Activated CD4-positive, alpha-beta T cell treated with anti-CD3 and anti-CD28 coated beads for 36 hours (primary cell): ENCODE measurements at regions of chr1 and their contacts with region 1.

Region 1: GRCh38 chr1:25997828-25998761 is at the start of gene PAFAH2:
- DNase-seq: peak; percentile 99
- ATAC-seq: peak; percentile 98
- H3K4me3 Mint-ChIP-seq: peak within 1 kb of the TSS; percentile 98
- H3K27ac Mint-ChIP-seq: peak within 1 kb of the TSS; percentile 98
- H3K4me1 Mint-ChIP-seq: peaks cover 28% of the 10 kb centered on the region
- H3K27me3 Mint-ChIP-seq: no peaks in the 10 kb centered on the region
- total RNA-seq, gene PAFAH2: 6.6 to 7.9 TPM

Region 2: DNA sequence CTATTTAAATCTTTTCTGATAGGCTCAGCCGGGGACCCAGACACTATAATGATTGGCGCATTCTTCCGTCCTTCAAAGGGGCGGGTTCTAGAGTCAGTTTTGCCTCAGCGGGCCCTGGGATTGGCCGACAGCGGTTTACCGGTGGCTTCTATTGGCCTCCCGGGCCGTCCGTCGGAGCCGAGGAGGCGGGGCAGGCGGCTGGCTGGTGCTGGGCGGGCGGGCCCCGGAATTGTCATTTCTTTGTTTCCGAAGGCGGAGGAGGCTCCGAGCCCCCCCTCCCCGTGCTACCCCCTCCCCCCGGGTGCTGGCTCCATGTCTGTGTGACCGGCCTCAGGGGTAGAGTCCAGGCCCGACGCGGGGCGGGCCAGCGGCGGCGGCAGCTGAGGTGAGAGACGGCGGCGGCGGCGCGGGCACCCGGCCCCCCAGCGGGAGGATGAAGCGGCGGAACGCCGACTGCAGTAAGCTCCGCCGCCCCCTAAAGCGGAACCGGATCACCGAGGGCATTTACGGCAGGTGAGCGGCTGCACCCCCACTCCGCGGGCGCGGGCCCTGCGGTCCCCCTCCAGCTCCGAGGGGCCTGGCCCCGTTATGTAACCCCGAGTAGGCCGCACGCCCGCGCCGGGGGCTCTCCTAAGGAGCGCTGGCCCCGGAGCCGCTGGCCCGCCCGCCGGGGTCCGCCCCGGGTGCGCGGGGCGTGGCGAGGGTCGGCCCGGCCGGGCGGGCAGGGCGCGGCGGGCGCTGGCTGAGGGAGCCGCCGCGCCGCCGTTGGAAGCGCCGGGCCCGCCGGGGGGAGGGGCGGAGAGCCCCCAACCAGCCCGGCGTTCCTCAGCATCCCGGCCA is 567.2 kb before region 1 on chr1 and contains the start of gene MACO1:
- CTCF ChIA-PET with region 1: no interaction called
- POLR2A ChIA-PET with region 1: no interaction called
- intact Hi-C with region 1: loop called in 1 of 2 experiments (anchors 1 kb)
- DNase-seq: peak; percentile 98
- ATAC-seq: peak; percentile 93
- H3K4me3 Mint-ChIP-seq: peak within 1 kb of the TSS; percentile 93
- H3K27ac Mint-ChIP-seq: peak within 1 kb of the TSS; percentile 99
- H3K4me1 Mint-ChIP-seq: peaks cover 47% of the 10 kb centered on the region
- H3K27me3 Mint-ChIP-seq: no peaks in the 10 kb centered on the region
- total RNA-seq, gene MACO1: 15.7 to 18.5 TPM

Region 3: DNA sequence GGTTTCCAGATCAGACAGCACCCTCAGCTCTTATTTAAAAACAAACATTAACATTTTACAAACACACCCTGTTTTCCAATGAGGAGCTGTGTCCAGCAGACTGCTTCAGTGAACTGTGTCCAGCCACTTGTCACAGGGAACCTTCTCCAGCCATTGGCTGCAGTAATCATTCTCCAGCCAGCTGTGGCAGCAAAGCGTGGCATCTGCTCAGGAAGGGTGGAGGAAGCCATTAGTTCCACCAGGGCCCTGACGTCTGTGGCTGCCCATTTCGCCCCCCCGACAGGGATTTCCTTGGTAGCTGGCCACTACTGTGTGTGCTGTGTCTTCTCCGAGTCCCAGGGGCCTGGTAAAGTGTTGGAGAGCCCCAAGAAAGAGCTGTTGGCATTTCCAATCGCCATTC is 261.0 kb before region 1 on chr1:
- CTCF ChIA-PET with region 1: no interaction called
- POLR2A ChIA-PET with region 1: no interaction called
- intact Hi-C with region 1: no loop called
- DNase-seq: no peak
- ATAC-seq: no peak
- H3K4me3 Mint-ChIP-seq: no peak overlapping the region
- H3K27ac Mint-ChIP-seq: no peak overlapping the region
- H3K4me1 Mint-ChIP-seq: peaks cover 29% of the 10 kb centered on the region
- H3K27me3 Mint-ChIP-seq: no peaks in the 10 kb centered on the region

Region 4: GRCh38 chr1:25819576-25820246 is 178.4 kb before region 1 on chr1 and contains the start of gene MTFR1L:
- CTCF ChIA-PET with region 1: interaction called, 5 read pairs
- POLR2A ChIA-PET with region 1: no interaction called
- intact Hi-C with region 1: loop called (anchors 1 to 2 kb)
- DNase-seq: peak; percentile 97
- ATAC-seq: peak; percentile 92
- H3K4me3 Mint-ChIP-seq: peak within 1 kb of the TSS; percentile 87
- H3K27ac Mint-ChIP-seq: peak within 1 kb of the TSS; percentile 93
- H3K4me1 Mint-ChIP-seq: peaks cover 33% of the 10 kb centered on the region
- H3K27me3 Mint-ChIP-seq: no peaks in the 10 kb centered on the region
- total RNA-seq, gene MTFR1L: 27.7 to 30.8 TPM

Region 5: GRCh38 chr1:25874934-25875855 is 122.9 kb before region 1 on chr1 and contains the start of gene PAQR7:
- CTCF ChIA-PET with region 1: interaction called, 3 read pairs
- POLR2A ChIA-PET with region 1: interaction called, 3 read pairs
- intact Hi-C with region 1: loop called in 1 of 2 experiments (anchors 1 kb)
- DNase-seq: peak; percentile 78
- ATAC-seq: peak; percentile 86
- H3K4me3 Mint-ChIP-seq: peak within 1 kb of the TSS; percentile 82
- H3K27ac Mint-ChIP-seq: peak within 1 kb of the TSS; percentile 63
- H3K4me1 Mint-ChIP-seq: peaks cover 5% of the 10 kb centered on the region
- H3K27me3 Mint-ChIP-seq: peaks cover 2% of the 10 kb centered on the region
- total RNA-seq, gene PAQR7: 3.9 to 4.4 TPM

Region 6: GRCh38 chr1:25971066-25971810 is 26.9 kb before region 1 on chr1:
- CTCF ChIA-PET with region 1: interaction called, 8 read pairs
- POLR2A ChIA-PET with region 1: no interaction called
- intact Hi-C with region 1: loop called in 1 of 2 experiments (anchors 1 kb)
- DNase-seq: peak; percentile 36
- ATAC-seq: peak; percentile 82
- H3K4me3 Mint-ChIP-seq: peak overlapping the region; percentile 48
- H3K27ac Mint-ChIP-seq: peak overlapping the region; percentile 86
- H3K4me1 Mint-ChIP-seq: peaks cover 31% of the 10 kb centered on the region
- H3K27me3 Mint-ChIP-seq: no peaks in the 10 kb centered on the region

Region 7: DNA sequence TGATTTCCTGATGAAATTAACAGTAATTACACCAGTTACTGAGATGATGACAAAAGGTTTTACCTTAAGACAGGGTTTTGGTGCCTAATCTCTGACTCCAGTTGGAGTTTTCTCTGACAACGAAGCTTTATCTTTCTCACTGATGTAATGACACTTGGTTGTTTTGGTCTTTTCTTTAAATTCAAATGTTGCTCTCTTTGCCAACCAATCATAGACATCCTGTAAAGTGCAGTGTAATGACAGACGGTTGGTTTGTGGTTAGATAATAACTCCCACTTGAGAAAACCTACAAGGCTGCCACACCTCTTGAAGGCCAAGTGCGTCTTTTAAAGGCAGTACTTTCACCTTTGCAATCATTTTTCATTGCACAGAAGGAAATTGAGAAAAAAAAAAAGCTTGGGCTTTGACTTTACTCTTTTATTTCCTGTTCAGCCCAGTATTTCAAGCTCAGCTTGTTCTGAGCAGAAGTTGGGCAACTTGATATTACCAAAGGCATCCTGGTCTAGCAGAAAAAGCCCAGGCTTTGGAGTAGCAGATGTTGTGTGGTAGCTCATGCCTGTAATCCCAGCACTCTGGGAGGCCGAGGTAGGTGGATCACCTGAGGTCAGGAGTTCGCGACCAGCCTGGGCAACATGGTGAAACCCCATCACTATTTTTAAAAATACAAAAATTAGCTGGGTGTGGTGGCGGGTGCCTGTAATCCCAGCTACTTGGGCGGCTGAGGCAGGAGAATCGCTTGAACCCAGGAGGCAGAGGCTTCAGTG is 128.4 kb after region 1 on chr1:
- CTCF ChIA-PET with region 1: no interaction called
- POLR2A ChIA-PET with region 1: no interaction called
- intact Hi-C with region 1: no loop called
- DNase-seq: peak; percentile 52
- ATAC-seq: peak; percentile 88
- H3K4me3 Mint-ChIP-seq: peak overlapping the region; percentile 58
- H3K27ac Mint-ChIP-seq: peak overlapping the region; percentile 86
- H3K4me1 Mint-ChIP-seq: peaks cover 51% of the 10 kb centered on the region
- H3K27me3 Mint-ChIP-seq: no peaks in the 10 kb centered on the region

Region 8: GRCh38 chr1:26472901-26473845 is 475.1 kb after region 1 on chr1:
- CTCF ChIA-PET with region 1: no interaction called
- POLR2A ChIA-PET with region 1: no interaction called
- intact Hi-C with region 1: loop called in 1 of 2 experiments (anchors 2 kb)
- DNase-seq: peak; percentile 97
- ATAC-seq: peak; percentile 62
- H3K4me3 Mint-ChIP-seq: peak overlapping the region; percentile 91
- H3K27ac Mint-ChIP-seq: peak overlapping the region; percentile 43
- H3K4me1 Mint-ChIP-seq: peaks cover 50% of the 10 kb centered on the region
- H3K27me3 Mint-ChIP-seq: no peaks in the 10 kb centered on the region